Stomach (tissue), 19 donors: ENCODE measurements at regions of chr11 and their contacts with region 1.

Region 1: GRCh38 chr11:4636962-4637661 is at the start of gene OR51D1:
- DNase-seq: peak; percentile 79 to 87
- H3K4me3 ChIP-seq: peak within 1 kb of the TSS; percentile 7 to 29 (median 20)
- H3K27ac ChIP-seq: no peak within 1 kb of the TSS
- H3K4me1 ChIP-seq: peaks cover 0 to 9% (median 7%) of the 10 kb centered on the region in 4 donors
- H3K27me3 ChIP-seq: peaks cover 0 to 6% (median 0%) of the 10 kb centered on the region in 3 donors
- CTCF ChIP-seq: peak in 6 of 7 experiments; percentile 22 to 90 (median 86)
- EP300 ChIP-seq: no peak
- POLR2A ChIP-seq: no peak
- total RNA-seq, gene OR51D1: not detected

Region 2: GRCh38 chr11:4826425-4826824 is 189.3 kb after region 1 on chr11:
- intact Hi-C with region 1: loop called (anchors 10 kb)
- DNase-seq: peak in 1 of 2 donors; percentile 35
- H3K4me3 ChIP-seq: no peak overlapping the region
- H3K27ac ChIP-seq: peak overlapping the region in 1 of 5 donors; percentile 4
- H3K4me1 ChIP-seq: peaks cover 0 to 6% (median 0%) of the 10 kb centered on the region in 4 donors
- H3K27me3 ChIP-seq: no peaks in the 10 kb centered on the region
- CTCF ChIP-seq: peak in 2 of 7 experiments; percentile 42 to 63
- EP300 ChIP-seq: no peak
- POLR2A ChIP-seq: no peak

Region 3: GRCh38 chr11:5004424-5005274 is 367.5 kb after region 1 on chr11:
- intact Hi-C with region 1: loop called (anchors 5 kb)
- DNase-seq: peak; percentile 72 to 83
- H3K4me3 ChIP-seq: no peak overlapping the region
- H3K27ac ChIP-seq: no peak overlapping the region
- H3K4me1 ChIP-seq: no peaks in the 10 kb centered on the region
- H3K27me3 ChIP-seq: no peaks in the 10 kb centered on the region
- CTCF ChIP-seq: peak in 5 of 7 experiments; percentile 21 to 53 (median 42)
- EP300 ChIP-seq: no peak
- POLR2A ChIP-seq: no peak